IMR-90 (cell line): ENCODE measurements at regions of chr1 and their contacts with region 1.

Region 1: GRCh38 chr1:60848583-60849188 is 233.7 kb upstream of the NFIA start:
- DNase-seq: peak; percentile 38
- ATAC-seq: no peak
- H3K4me3 ChIP-seq: no peak overlapping the region
- H3K27ac ChIP-seq: no peak overlapping the region
- H3K4me1 ChIP-seq: no peaks in the 10 kb centered on the region
- H3K27me3 ChIP-seq: no peaks in the 10 kb centered on the region
- CTCF ChIP-seq: peak; percentile 58
- POLR2A ChIP-seq: no peak
- RAD21 ChIP-seq: peak; percentile 50

Region 2: GRCh38 chr1:59971464-59971911 is 877.2 kb before region 1 on chr1:
- CTCF ChIA-PET with region 1: no interaction called
- POLR2A ChIA-PET with region 1: no interaction called
- dilution Hi-C with region 1: no loop called
- in situ Hi-C with region 1: no loop called
- intact Hi-C with region 1: loop called (anchors 10 kb)
- DNase-seq: peak; percentile 34
- ATAC-seq: peak; percentile 84
- H3K4me3 ChIP-seq: no peak overlapping the region
- H3K27ac ChIP-seq: no peak overlapping the region
- H3K4me1 ChIP-seq: peaks cover 5% of the 10 kb centered on the region
- H3K27me3 ChIP-seq: peaks cover 15% of the 10 kb centered on the region
- CTCF ChIP-seq: peak; percentile 88
- POLR2A ChIP-seq: no peak
- RAD21 ChIP-seq: peak; percentile 68

Region 3: DNA sequence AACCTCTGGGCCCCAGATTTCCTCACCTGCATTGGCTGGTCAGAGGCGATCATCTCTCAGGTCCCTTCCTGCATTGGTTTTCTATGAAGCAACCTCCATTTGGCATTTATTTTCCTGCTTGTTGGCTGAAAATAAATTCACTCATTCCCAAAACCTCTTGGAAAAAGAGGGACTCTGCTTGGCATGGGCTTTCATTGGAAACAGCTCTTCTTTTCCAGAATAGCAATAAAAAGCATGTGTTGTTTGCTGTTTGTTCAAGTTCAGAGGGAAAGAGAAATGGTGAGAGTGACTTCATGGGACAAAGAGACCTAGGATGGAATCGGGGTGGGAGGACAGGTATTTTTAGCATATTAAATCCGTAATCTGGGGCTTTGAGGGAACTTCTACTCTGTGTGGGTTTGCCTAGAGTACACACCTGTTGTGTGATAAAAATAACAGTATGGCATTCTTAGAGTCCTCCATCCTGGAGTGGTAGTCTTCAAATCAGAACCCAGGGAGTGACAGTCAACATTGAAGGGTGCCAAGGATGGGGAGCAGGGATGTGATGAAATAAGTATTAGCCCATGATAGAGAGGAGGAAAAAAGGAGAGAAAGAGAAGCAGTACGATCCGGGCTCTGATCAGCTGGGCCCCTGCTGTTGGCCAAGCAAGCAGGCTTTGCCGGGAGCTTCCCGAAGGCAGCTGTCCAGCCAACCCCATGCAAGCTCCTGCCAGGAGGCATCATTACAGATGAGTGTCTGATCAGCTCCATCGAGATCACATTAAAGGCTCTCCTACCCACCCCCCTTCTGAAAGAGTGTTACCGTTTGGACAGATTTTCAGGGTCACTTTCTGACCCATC is 101.8 kb after region 1 on chr1:
- CTCF ChIA-PET with region 1: no interaction called
- POLR2A ChIA-PET with region 1: no interaction called
- dilution Hi-C with region 1: no loop called
- in situ Hi-C with region 1: no loop called
- intact Hi-C with region 1: no loop called
- DNase-seq: no peak
- ATAC-seq: no peak
- H3K4me3 ChIP-seq: no peak overlapping the region
- H3K27ac ChIP-seq: no peak overlapping the region
- H3K4me1 ChIP-seq: no peaks in the 10 kb centered on the region
- H3K27me3 ChIP-seq: no peaks in the 10 kb centered on the region; the same call in 1 of the 2 replicates
- CTCF ChIP-seq: no peak
- POLR2A ChIP-seq: no peak
- RAD21 ChIP-seq: no peak

Region 4: DNA sequence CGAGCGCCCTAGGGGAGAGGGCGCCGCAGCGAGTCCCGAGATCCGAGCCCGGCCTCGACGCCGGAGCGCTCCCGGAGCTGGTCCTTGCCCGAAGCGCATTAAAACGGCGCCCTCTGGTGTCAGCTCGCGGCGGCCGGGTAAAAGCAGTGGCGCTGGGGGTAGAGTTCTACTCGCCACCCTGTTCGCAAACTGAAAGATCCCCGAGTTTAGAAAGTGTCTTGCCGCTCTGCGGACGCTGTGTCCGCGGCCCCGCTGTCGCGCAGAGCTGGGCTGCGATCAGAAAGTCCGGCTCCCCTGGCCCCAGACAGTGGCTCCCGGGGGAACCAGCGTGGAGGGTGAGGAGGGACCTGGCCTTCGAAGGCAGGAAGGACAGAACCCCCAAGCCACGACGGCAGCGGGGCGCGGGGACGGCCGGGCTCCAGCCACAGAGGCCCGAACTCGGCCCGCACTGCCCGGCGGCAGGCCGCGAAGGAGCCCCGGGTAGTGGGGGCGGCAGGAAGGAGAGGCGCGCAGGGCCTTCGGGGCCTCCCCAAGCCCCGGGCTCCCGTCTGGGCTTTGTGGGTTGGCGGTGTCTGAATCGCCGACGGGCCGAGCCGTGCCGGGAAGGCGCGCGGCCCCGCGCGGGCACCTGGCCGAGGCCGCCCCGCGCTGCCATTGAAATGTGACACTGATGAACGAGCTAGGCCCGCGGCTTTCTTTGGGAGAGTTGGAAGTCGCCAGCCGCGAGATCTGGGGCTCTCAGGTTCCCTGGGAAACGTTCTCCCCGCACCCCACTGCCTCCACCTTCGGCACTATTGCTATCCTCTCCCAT is 194.5 kb after region 1 on chr1:
- CTCF ChIA-PET with region 1: no interaction called
- POLR2A ChIA-PET with region 1: no interaction called
- dilution Hi-C with region 1: no loop called
- in situ Hi-C with region 1: no loop called
- intact Hi-C with region 1: loop called (anchors 2 kb)
- DNase-seq: peak; percentile 48
- ATAC-seq: peak; percentile 96
- H3K4me3 ChIP-seq: peak overlapping the region; percentile 30
- H3K27ac ChIP-seq: no peak overlapping the region
- H3K4me1 ChIP-seq: no peaks in the 10 kb centered on the region
- H3K27me3 ChIP-seq: peaks cover 17% of the 10 kb centered on the region
- CTCF ChIP-seq: peak; percentile 68
- POLR2A ChIP-seq: no peak
- RAD21 ChIP-seq: peak; percentile 74

Region 5: GRCh38 chr1:61343734-61344420 is 495.2 kb after region 1 on chr1:
- CTCF ChIA-PET with region 1: no interaction called
- POLR2A ChIA-PET with region 1: no interaction called
- dilution Hi-C with region 1: no loop called
- in situ Hi-C with region 1: no loop called
- intact Hi-C with region 1: no loop called
- DNase-seq: no peak
- ATAC-seq: no peak
- H3K4me3 ChIP-seq: no peak overlapping the region
- H3K27ac ChIP-seq: no peak overlapping the region
- H3K4me1 ChIP-seq: no peaks in the 10 kb centered on the region
- H3K27me3 ChIP-seq: peaks cover 21% of the 10 kb centered on the region
- CTCF ChIP-seq: no peak
- POLR2A ChIP-seq: no peak
- RAD21 ChIP-seq: no peak

Region 6: GRCh38 chr1:61588736-61589672 is 740.3 kb after region 1 on chr1:
- CTCF ChIA-PET with region 1: no interaction called
- POLR2A ChIA-PET with region 1: no interaction called
- dilution Hi-C with region 1: no loop called
- in situ Hi-C with region 1: no loop called
- intact Hi-C with region 1: loop called (anchors 2 kb)
- DNase-seq: peak; percentile 36
- ATAC-seq: peak; percentile 85
- H3K4me3 ChIP-seq: no peak overlapping the region
- H3K27ac ChIP-seq: no peak overlapping the region
- H3K4me1 ChIP-seq: no peaks in the 10 kb centered on the region
- H3K27me3 ChIP-seq: no peaks in the 10 kb centered on the region; the same call in 1 of the 2 replicates
- CTCF ChIP-seq: peak; percentile 63
- POLR2A ChIP-seq: no peak
- RAD21 ChIP-seq: peak; percentile 63